Ascending aorta (tissue), 2 donors: ENCODE measurements at regions of chr20 and their contacts with region 1.

Region 1: DNA sequence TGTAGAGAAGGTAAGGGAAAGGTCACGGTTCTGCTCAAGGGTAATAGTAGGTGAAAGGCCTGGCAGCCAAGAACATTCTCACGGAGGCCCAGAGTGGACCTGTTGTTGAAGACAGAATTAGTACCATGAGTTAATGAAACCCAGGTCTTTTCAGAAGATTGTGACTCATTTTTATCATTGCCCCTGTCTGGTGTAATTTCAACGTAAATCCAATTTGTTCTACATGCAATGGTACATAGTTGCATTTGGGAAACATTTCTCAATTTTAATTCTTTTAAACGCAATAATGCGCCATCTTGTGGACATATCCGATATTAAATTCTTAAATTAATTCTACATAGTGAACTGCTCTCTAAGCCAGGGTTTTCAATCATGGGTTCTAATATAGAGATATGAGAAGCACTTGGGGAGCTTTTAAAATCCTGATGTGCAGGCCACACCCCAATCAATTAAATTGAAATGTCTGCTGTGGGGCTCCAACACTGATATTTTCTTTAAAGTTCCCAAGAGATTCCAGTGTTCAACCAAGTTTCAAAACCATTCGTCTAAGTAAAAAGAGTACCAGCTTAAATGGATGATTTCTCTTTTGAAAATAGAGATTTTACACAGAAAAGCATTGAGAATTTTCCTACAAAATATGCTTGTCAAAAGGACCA is 257.4 kb downstream of the PLCB1 start:
- DNase-seq: no peak
- H3K4me3 ChIP-seq: no peak overlapping the region
- H3K27ac ChIP-seq: no peak overlapping the region
- H3K4me1 ChIP-seq: no peaks in the 10 kb centered on the region
- H3K27me3 ChIP-seq: no peaks in the 10 kb centered on the region
- CTCF ChIP-seq: peak in 2 of 3 experiments; percentile 32 to 51

Region 2: GRCh38 chr20:8043687-8044282 is 345.7 kb before region 1 on chr20:
- intact Hi-C with region 1: loop called (anchors 2 kb)
- DNase-seq: no peak
- H3K4me3 ChIP-seq: no peak overlapping the region
- H3K27ac ChIP-seq: no peak overlapping the region
- H3K4me1 ChIP-seq: no peaks in the 10 kb centered on the region
- H3K27me3 ChIP-seq: no peaks in the 10 kb centered on the region
- CTCF ChIP-seq: peak; percentile 53 to 74 (median 69)

Region 3: DNA sequence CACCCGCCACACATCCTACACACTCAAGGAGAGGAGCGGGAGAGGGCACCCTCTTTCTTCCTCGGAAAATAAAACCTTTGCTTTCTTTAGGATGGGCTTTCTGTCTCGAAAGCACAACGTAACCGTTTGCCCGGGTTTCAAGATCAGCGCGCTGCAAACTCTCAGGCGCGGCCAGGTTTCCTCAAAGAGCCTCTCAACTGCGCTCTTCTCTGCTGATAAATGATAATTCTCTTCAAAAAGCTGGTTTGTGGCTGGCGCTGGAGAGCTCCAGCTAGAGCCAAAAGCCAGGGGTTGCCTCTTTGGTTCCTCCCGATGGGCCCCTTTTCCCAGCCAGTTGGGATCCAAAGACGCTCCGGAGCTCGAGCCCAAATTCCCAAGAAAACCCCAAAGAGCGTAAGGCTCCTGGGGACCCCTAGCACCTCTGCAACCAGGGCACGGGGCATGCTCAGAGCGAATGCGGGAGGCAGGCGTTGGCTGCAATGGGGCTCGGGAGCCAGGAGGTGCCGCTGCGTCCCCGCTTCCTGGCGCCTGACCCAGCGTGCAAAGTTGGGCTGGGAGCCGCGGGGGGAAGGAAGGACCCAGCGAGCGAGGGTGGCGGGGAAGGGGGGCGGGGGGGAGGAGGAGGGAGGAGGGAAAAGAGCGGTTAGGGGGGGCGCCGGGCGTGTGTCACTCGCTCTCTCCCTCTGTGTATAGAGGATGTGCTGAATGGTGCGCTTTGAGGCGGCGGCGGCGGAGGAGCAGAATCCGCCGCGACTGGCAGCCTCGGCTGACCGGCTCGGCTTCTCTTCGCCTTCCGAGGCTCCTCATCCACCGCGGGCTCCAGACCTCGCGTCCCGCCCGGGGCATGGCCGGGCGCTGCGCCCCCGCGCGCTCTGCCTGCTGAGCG is 257.7 kb before region 1 on chr20 and contains the start of gene PLCB1:
- intact Hi-C with region 1: loop called (anchors 1 kb)
- DNase-seq: peak in 1 of 2 donors; percentile 87
- H3K4me3 ChIP-seq: peak within 1 kb of the TSS; percentile 73 to 82
- H3K27ac ChIP-seq: peak within 1 kb of the TSS; percentile 37 to 47
- H3K4me1 ChIP-seq: no peaks in the 10 kb centered on the region
- H3K27me3 ChIP-seq: no peaks in the 10 kb centered on the region
- CTCF ChIP-seq: peak; percentile 71 to 84 (median 76)
- total RNA-seq, gene PLCB1: 22.9 TPM

Region 4: DNA sequence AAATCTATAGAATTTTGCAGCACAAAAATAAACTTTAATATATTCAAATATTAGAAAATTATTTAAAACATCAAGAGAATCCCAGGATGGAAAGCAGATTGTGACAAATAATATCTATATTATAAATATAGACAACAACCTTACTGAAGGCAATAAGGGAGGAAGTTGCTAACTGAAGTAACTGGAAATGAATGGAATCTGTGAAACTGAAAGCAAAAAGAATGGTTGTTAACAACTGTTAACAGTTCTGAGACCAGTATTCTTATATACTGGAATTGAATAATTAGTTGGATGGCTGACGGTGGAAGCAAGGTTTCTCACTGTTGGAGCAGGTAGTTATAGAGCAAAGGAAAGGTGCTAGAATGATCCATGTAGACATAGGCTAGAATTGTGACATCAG is 37.0 kb before region 1 on chr20:
- intact Hi-C with region 1: no loop called
- DNase-seq: no peak
- H3K4me3 ChIP-seq: no peak overlapping the region
- H3K27ac ChIP-seq: no peak overlapping the region
- H3K4me1 ChIP-seq: no peaks in the 10 kb centered on the region
- H3K27me3 ChIP-seq: no peaks in the 10 kb centered on the region
- CTCF ChIP-seq: no peak